ENCODE measurements at regions of chr16 and their contacts with region 1.

Region 1: GRCh38 chr16:56317998-56318826 is 107.1 kb downstream of the AMFR start:
- DNase-seq: peak; percentile 85
- H3K4me3 Mint-ChIP-seq: no peak overlapping the region
- H3K27ac Mint-ChIP-seq: no peak overlapping the region
- H3K4me1 Mint-ChIP-seq: peaks cover 9% of the 10 kb centered on the region
- H3K27me3 Mint-ChIP-seq: peaks cover 36% of the 10 kb centered on the region

Region 2: DNA sequence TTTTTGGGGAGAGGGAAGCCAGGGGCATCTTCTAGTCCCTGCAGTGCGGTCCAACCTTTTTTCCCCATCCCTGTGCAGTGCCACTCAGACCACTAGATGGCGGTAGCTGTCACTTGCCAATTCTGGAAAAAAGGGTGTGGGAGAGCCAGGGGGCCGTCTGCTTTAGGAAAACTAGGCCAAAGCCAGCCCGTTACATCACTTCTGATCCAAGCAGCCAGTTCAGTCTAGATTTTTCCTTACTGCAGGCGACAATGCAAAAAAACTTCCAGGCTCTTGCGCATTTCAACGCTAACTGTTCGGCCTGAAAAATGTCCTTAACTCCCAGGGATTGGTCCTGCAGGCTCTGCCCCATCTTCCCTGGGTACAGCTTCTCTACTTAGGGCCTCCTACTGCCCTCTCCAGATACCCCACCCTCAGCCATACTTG is 373.8 kb before region 1 on chr16:
- CTCF ChIA-PET with region 1: interaction called, 67 read pairs
- DNase-seq: peak; percentile 55
- H3K4me3 Mint-ChIP-seq: no peak overlapping the region
- H3K27ac Mint-ChIP-seq: no peak overlapping the region
- H3K4me1 Mint-ChIP-seq: no peaks in the 10 kb centered on the region
- H3K27me3 Mint-ChIP-seq: peaks cover 10% of the 10 kb centered on the region

Region 3: DNA sequence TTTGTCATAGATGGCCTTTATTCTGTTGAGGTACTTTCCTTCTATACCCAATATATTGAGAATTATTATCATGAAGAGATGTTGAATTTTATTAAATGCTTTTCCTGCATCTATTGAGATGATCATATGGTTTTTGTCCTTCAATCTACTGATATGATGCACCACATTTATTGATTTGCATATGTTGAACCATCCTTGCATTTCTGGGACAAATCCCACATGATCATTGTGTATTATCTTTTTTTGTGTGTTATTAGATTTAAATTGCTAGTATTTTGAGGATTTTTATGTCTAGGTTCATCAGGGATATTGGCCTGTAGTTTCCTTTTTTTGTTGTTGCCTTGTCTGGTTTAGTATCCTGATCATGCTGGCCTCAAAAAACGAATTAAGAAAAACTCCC is 318.5 kb before region 1 on chr16:
- CTCF ChIA-PET with region 1: no interaction called
- DNase-seq: no peak
- H3K4me3 Mint-ChIP-seq: no peak overlapping the region
- H3K27ac Mint-ChIP-seq: no peak overlapping the region
- H3K4me1 Mint-ChIP-seq: no peaks in the 10 kb centered on the region
- H3K27me3 Mint-ChIP-seq: peaks cover 3% of the 10 kb centered on the region

Region 4: DNA sequence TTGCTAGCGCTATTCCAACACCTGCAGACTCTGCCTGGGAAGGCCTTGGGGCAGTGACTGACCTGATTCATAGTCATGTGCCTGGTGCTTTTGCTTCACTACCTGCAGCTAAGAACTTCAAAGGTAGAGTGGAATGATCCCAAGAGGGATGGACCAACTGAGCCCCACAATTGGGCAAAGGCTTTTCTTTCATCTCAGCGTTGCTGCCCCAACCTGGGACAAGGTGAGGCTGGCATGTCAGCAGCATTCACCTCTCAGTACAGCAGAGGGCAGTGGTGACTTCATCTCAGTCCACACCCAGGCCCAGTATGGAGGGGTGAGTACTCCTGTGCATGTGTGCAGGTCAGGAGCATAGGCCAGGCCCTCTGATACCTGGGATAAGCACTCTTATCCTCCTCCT is 276.5 kb before region 1 on chr16:
- CTCF ChIA-PET with region 1: interaction called, 27 read pairs
- DNase-seq: peak; percentile 46
- H3K4me3 Mint-ChIP-seq: no peak overlapping the region
- H3K27ac Mint-ChIP-seq: peak overlapping the region; percentile 3
- H3K4me1 Mint-ChIP-seq: no peaks in the 10 kb centered on the region
- H3K27me3 Mint-ChIP-seq: peaks cover 23% of the 10 kb centered on the region

Region 5: GRCh38 chr16:56047307-56048234 is 270.6 kb before region 1 on chr16:
- CTCF ChIA-PET with region 1: interaction called, 27 read pairs
- DNase-seq: no peak
- H3K4me3 Mint-ChIP-seq: no peak overlapping the region
- H3K27ac Mint-ChIP-seq: no peak overlapping the region
- H3K4me1 Mint-ChIP-seq: peaks cover 2% of the 10 kb centered on the region
- H3K27me3 Mint-ChIP-seq: peaks cover 33% of the 10 kb centered on the region

Region 6: DNA sequence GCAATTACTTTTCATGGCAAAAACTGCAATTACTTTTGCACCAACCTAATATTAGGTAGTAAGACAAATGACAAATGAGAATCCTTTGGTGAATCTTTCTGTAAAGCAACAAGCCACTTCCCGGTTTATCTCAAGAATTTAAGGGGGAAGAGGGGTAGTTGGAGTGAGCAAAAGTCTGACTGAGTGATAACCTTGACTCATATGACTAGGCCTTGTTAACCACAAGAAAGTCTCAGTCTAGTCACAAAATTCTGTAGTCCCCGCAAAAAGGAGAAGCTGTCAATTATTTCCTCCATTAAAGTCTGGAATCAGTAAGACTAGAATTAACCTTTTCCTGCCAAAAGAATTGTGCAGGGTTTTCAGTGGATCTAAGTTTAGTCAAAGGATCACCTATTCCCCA is 199.1 kb before region 1 on chr16:
- CTCF ChIA-PET with region 1: no interaction called
- DNase-seq: no peak
- H3K4me3 Mint-ChIP-seq: no peak overlapping the region
- H3K27ac Mint-ChIP-seq: no peak overlapping the region
- H3K4me1 Mint-ChIP-seq: no peaks in the 10 kb centered on the region
- H3K27me3 Mint-ChIP-seq: peaks cover 4% of the 10 kb centered on the region

Region 7: DNA sequence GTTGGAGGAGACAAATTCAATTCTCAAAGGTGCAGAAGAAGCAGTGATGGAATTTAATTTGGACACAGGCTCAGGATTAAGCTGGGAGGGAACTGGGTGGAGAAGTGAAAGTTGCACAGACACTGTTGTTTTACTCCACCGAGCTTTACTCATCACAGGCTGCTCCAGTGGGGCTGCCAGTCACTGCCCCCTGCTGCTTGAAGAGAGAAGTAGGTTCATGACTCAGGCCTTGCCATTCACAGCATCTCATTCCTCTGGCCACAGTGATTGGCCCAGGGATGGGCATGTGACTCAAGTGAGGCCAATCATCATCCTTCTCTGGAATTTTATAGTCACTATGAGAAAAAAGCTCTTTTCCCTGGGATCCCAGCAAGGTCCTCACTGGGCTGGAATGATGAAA is 115.2 kb before region 1 on chr16:
- CTCF ChIA-PET with region 1: interaction called, 27 read pairs
- DNase-seq: peak; percentile 67
- H3K4me3 Mint-ChIP-seq: no peak overlapping the region
- H3K27ac Mint-ChIP-seq: no peak overlapping the region
- H3K4me1 Mint-ChIP-seq: no peaks in the 10 kb centered on the region
- H3K27me3 Mint-ChIP-seq: peaks cover 20% of the 10 kb centered on the region

Region 8: DNA sequence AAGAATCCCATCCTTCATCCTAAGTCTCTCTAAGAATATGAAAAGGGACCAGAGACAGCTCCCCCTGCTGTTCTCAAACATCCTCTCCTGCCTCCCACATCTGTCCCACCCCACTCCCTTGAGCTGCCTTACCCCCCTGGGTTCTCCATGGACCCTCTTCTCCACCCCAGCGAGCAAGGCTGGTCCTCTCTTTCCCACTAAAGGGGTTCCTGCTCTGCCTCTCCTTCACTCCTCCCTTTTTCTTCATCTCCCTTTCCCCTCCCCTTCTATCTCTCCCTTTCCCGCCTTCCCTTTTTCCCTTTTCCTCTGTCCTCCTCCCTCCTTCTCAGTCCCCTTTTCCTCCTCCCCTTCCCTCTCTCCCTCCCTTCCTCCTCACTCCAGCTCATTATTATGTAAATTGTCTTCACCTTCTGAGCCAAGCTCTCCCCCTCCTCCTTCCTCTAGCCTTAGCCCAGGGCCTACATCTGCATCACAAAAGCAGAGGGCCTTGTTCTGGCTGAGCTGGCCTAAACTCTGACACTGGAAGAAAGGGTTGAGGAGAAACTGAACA is 36.9 kb before region 1 on chr16:
- CTCF ChIA-PET with region 1: interaction called, 14 read pairs
- DNase-seq: peak; percentile 30
- H3K4me3 Mint-ChIP-seq: no peak overlapping the region
- H3K27ac Mint-ChIP-seq: no peak overlapping the region
- H3K4me1 Mint-ChIP-seq: peaks cover 23% of the 10 kb centered on the region
- H3K27me3 Mint-ChIP-seq: peaks cover 26% of the 10 kb centered on the region

Region 9: DNA sequence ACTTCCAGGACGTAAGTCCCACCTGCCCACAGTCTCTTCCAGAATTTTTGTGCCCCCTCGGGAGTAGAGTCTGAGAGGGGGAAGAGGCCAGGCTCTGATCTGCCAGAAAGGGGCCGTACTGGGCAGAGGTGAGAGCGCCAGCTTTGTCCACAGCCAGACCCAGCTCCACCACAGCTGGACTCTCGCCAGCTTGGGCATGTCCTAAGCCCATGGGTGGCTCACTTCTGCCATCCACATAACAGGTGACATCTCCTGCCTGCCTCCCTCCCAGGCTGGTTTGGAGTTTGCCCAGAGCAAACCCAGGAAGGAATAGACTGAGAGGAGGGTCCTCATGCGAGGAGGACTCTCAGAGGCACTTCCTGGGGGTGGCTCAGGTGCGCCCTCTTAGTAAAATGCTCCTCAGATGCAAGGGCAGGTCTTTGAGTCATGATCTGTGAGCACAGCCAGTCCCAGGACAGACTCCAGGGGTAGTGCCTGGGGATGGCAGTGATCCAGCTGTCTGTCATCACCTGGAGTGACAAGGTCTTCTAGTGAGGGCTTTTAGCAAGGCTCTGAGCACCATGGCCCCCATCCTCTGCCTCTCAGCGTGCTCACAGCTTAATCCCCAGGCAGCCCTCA is 18.0 kb after region 1 on chr16:
- CTCF ChIA-PET with region 1: no interaction called
- DNase-seq: no peak
- H3K4me3 Mint-ChIP-seq: no peak overlapping the region
- H3K27ac Mint-ChIP-seq: no peak overlapping the region
- H3K4me1 Mint-ChIP-seq: no peaks in the 10 kb centered on the region
- H3K27me3 Mint-ChIP-seq: no peaks in the 10 kb centered on the region

Region 10: GRCh38 chr16:56389554-56389953 is 71.3 kb after region 1 on chr16:
- CTCF ChIA-PET with region 1: no interaction called
- DNase-seq: no peak
- H3K4me3 Mint-ChIP-seq: no peak overlapping the region
- H3K27ac Mint-ChIP-seq: no peak overlapping the region
- H3K4me1 Mint-ChIP-seq: no peaks in the 10 kb centered on the region
- H3K27me3 Mint-ChIP-seq: no peaks in the 10 kb centered on the region

Measured in activated naive CD4-positive, alpha-beta T cell treated with anti-CD3 and anti-CD28 coated beads, Interleukin-2, amount 10 ng/mL, durations not matched to agents 7 days and 5 days (primary cell).